Natural killer cell (primary cell): ENCODE measurements at regions of chr2 and their contacts with region 1.

Region 1: DNA sequence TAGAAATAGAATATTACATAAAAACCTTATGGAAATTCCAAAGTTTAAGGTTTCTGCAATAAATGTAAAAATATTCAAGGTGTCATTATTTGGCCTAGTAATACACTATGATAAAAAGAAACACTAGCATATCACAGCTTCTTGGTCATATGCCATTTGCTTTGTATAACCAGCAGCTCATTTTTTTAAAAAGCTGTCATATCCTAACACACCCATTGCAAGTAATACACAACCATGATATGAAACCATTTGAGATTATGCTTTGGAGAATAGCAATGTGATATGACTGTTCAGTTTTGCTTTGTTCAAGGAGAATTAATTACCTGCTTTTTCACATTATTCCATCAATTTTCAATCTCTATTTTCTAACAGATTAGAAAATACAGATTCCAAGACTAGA is 149.0 kb downstream of the IKZF2 start:
- DNase-seq: no peak
- ATAC-seq: peak; percentile 36 to 62 (median 57)
- H3K4me3 ChIP-seq: no peak overlapping the region
- H3K4me3 Mint-ChIP-seq: no peak overlapping the region
- H3K27ac ChIP-seq: no peak overlapping the region
- H3K27ac Mint-ChIP-seq: peak overlapping the region; percentile 89 to 96
- H3K4me1 ChIP-seq: no peaks in the 10 kb centered on the region
- H3K4me1 Mint-ChIP-seq: peaks cover 35 to 59% of the 10 kb centered on the region in 2 donors
- H3K27me3 ChIP-seq: no peaks in the 10 kb centered on the region
- H3K27me3 Mint-ChIP-seq: no peaks in the 10 kb centered on the region
- CTCF ChIP-seq: no peak

Region 2: GRCh38 chr2:212968280-212968679 is 34.1 kb before region 1 on chr2:
- intact Hi-C with region 1: loop called (anchors 5 kb)
- DNase-seq: no peak
- ATAC-seq: peak; percentile 24 to 49 (median 30)
- H3K4me3 ChIP-seq: no peak overlapping the region
- H3K4me3 Mint-ChIP-seq: peak overlapping the region; percentile 56
- H3K27ac ChIP-seq: peak overlapping the region; percentile 54
- H3K27ac Mint-ChIP-seq: peak overlapping the region; percentile 87 to 94
- H3K4me1 ChIP-seq: no peaks in the 10 kb centered on the region
- H3K4me1 Mint-ChIP-seq: peaks cover 37 to 43% of the 10 kb centered on the region in 2 donors
- H3K27me3 ChIP-seq: no peaks in the 10 kb centered on the region
- H3K27me3 Mint-ChIP-seq: no peaks in the 10 kb centered on the region
- CTCF ChIP-seq: no peak

Region 3: DNA sequence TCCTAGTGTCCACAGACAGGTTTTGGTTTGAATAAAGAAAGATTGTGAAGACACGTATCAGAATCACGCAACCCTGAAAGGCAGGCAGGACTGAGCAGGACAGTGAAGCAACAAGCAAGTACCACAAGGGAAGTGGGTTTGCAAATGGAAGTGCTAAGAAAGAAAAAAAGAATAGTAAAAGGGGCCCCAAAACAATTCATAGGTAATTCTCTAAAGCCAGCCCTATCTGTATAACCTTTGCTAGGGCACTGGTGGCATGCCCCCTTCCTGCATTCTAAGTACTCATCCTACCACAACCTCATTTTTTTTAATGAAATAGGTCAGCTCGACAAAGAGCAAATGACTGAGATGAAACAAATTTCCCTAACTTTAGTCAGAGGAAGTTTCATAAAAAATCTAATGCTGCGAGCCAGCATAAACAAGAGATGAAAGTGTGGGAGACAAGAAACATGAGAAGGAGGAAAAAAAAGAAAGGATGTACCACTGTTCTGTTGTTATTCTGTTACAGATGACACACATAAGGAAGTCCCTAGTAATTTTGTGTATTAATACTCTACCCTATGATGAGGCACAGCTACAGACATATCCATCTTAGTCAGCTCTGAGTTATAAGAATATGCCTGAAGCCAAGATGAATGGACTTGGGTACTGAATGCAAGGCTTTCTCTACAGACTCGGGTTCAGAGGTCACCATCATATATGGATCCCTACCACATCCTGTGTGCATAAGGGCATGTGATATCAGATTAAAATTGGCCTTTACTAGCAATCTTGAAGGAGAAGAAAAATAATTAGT is 116.9 kb after region 1 on chr2:
- intact Hi-C with region 1: loop called (anchors 5 kb)
- DNase-seq: peak; percentile 20 to 57
- ATAC-seq: peak; percentile 82 to 83 (median 82)
- H3K4me3 ChIP-seq: no peak overlapping the region
- H3K4me3 Mint-ChIP-seq: peak overlapping the region; percentile 85
- H3K27ac ChIP-seq: peak overlapping the region; percentile 82
- H3K27ac Mint-ChIP-seq: peak overlapping the region; percentile 95 to 99
- H3K4me1 ChIP-seq: peaks cover 27% of the 10 kb centered on the region
- H3K4me1 Mint-ChIP-seq: peaks cover 67 to 74% of the 10 kb centered on the region in 2 donors
- H3K27me3 ChIP-seq: no peaks in the 10 kb centered on the region
- H3K27me3 Mint-ChIP-seq: no peaks in the 10 kb centered on the region
- CTCF ChIP-seq: no peak